ENCODE measurements at regions of chr1 and their contacts with region 1.

Region 1: GRCh38 chr1:209827384-209828262 is at the start of gene UTP25:
- DNase-seq: peak; percentile 96
- ATAC-seq: peak; percentile 89
- H3K4me3 Mint-ChIP-seq: peak within 1 kb of the TSS; percentile 91
- H3K27ac Mint-ChIP-seq: peak within 1 kb of the TSS; percentile 81
- H3K4me1 Mint-ChIP-seq: peaks cover 39% of the 10 kb centered on the region
- H3K27me3 Mint-ChIP-seq: peaks cover 12% of the 10 kb centered on the region
- total RNA-seq, gene UTP25: 4.7 to 9.7 TPM

Region 2: DNA sequence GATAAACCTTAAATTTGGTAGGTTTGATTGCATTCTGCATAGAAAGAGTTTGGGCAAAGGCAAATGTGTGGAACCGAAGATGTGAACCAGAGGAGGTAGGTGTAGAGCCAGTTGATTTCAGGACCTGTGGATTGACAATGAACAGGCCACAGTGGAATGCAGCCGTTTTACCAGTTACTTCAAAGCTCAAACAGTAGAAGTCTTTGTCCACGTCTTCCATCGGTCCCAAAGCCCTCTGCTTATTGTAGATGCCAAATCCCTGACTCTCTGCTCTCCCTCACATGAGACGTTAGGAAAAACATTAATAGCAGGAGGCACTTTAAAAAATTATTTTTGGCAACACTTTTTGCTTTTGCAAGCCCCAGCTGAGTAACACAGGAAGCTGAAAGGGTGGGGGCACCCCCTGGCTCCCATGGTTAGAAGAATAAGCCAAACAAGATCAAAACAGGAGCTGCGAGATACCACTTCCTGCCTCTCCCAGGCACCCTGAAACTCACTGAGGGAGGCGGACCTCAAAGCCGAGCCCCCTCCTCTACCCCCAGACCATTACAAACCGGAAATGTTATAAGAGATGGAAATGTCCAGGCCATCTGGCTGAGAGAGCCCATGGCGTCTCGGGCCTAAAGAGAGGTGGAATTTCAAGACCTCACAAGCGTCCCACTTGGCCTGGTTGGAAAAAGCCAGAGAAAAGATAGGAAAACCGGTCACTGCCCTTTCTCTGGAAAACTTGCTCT is 58.3 kb before region 1 on chr1:
- CTCF ChIA-PET with region 1: interaction called, 13 read pairs
- DNase-seq: peak; percentile 92
- ATAC-seq: peak; percentile 65
- H3K4me3 Mint-ChIP-seq: no peak overlapping the region
- H3K27ac Mint-ChIP-seq: no peak overlapping the region
- H3K4me1 Mint-ChIP-seq: peaks cover 41% of the 10 kb centered on the region
- H3K27me3 Mint-ChIP-seq: no peaks in the 10 kb centered on the region

Region 3: DNA sequence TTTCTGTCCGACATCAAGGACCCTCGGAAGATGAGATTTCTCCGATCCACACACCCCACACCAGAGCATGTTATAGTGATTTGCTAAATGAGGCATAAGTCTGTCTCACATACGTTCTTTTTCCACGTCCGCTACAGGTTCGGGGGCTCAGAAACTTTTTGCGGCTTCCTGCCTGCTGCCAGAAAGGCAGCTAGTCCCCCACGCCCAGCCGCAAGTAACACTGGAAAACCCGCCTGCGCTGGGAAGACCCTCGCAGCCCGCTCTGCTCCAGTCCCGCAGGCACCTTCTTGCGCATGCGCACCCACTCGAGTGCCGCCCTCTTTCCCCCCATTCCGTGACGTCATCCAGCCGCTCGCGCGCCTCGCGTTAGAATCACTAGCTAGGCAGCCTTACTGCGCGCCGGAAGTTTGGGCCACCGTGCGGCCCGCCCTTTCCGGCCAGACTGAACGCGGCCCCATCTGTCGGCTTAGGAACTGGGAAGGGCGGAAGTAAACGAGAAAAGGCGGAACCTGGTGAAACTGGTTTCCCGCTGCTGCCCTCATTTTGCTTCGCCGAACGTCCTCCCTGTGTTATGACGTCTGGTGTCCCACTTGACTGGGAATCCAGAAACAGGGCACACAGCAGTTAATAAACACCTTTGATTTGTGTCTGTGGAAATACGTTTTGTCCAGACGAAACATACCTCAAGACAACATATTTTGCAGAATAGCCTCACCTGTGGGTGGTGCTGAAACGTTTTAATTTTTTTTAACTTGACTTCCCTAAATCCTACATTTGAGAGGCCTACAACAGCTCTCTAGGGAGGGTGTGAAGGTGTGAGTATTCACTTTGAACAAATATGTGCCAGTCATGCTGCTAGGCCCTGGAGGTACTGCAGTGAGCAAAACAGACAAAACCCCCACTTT is 43.1 kb before region 1 on chr1 and contains the start of gene C1orf74:
- CTCF ChIA-PET with region 1: interaction called, 13 read pairs
- DNase-seq: peak; percentile 99
- ATAC-seq: peak; percentile 99
- H3K4me3 Mint-ChIP-seq: peak within 1 kb of the TSS; percentile 92
- H3K27ac Mint-ChIP-seq: peak within 1 kb of the TSS; percentile 95
- H3K4me1 Mint-ChIP-seq: peaks cover 42% of the 10 kb centered on the region
- H3K27me3 Mint-ChIP-seq: no peaks in the 10 kb centered on the region
- total RNA-seq, gene C1orf74: 2.8 to 3.0 TPM

Region 4: GRCh38 chr1:209805875-209806760 is 21.5 kb before region 1 on chr1 and contains the start of gene IRF6:
- CTCF ChIA-PET with region 1: interaction called, 81 read pairs
- DNase-seq: peak; percentile 89
- ATAC-seq: peak; percentile 96
- H3K4me3 Mint-ChIP-seq: peak within 1 kb of the TSS; percentile 83
- H3K27ac Mint-ChIP-seq: peak within 1 kb of the TSS; percentile 93
- H3K4me1 Mint-ChIP-seq: peaks cover 18% of the 10 kb centered on the region
- H3K27me3 Mint-ChIP-seq: peaks cover 9% of the 10 kb centered on the region
- total RNA-seq, gene IRF6: 1.3 to 1.7 TPM

Measured in activated CD8-positive, alpha-beta memory T cell treated with anti-CD3 and anti-CD28 coated beads, Interleukin-2, amount 10 ng/mL, durations not matched to agents 7 days and 5 days (primary cell).